ENCODE measurements at regions of chr17 and their contacts with region 1.

Region 1: GRCh38 chr17:39153599-39154051 is 2.2 kb upstream of the PLXDC1 start:
- DNase-seq: peak; percentile 99
- H3K4me3 ChIP-seq: peak overlapping the region; percentile 68 to 87 (median 80)
- H3K27ac ChIP-seq: peak overlapping the region; percentile 87 to 95 (median 94)
- H3K4me1 ChIP-seq: peaks cover 21 to 43% (median 34%) of the 10 kb centered on the region in 4 donors
- H3K27me3 ChIP-seq: peaks cover 0 to 20% (median 6%) of the 10 kb centered on the region in 4 donors
- CTCF ChIP-seq: peak in 2 of 3 experiments; percentile 11 to 15
- EP300 ChIP-seq: no peak
- POLR2A ChIP-seq: no peak

Region 2: DNA sequence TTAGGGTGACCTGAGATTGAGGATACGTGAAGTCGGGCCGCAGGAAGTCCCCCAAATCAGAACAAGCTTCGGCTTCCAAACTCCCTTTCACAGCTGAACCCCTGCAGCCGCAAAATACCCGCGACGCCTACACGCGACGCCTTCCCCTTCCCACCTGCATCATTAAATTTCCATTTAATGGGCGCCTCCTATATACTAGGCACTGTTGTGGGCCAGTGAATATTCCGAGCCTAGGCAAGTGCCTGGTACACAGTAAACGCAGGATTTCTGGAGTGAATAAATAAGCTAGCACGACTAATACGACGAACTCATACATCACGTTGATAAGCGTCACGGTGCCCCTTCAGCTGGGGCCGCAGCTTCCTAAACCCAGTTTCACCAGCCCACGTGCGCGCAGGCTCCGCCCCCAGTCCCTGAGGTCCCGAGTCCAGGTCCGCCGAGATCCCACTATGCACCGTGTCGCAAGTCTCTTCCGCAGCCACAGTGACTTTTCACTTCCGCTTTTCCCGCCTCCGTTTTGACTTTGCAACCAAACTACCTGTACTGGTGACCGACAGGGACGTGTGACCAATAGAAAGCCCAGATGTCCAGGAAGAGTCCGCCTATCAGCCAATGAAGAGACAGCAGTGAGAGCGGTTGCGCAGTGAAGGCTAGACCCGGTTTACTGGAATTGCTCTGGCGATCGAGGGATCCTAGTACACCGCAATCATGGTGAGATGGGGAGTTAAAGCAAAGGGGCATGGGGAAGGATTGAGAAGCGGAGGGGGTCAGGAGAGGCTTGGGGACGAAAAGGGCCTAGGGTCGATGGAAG is 401.3 kb before region 1 on chr17 and contains the start of gene PSMB3:
- intact Hi-C with region 1: no loop called
- DNase-seq: peak; percentile 100
- H3K4me3 ChIP-seq: peak within 1 kb of the TSS; percentile 84 to 97 (median 92)
- H3K27ac ChIP-seq: peak within 1 kb of the TSS; percentile 87 to 97 (median 94)
- H3K4me1 ChIP-seq: peaks cover 45 to 75% (median 63%) of the 10 kb centered on the region in 4 donors
- H3K27me3 ChIP-seq: peaks cover 0 to 6% (median 0%) of the 10 kb centered on the region in 4 donors
- CTCF ChIP-seq: no peak
- EP300 ChIP-seq: no peak
- POLR2A ChIP-seq: no peak
- total RNA-seq, gene PSMB3: 122 to 158 (median 137) TPM

Region 3: GRCh38 chr17:38868817-38869525 is 284.7 kb before region 1 on chr17:
- intact Hi-C with region 1: loop called (anchors 5 kb)
- DNase-seq: peak; percentile 99
- H3K4me3 ChIP-seq: peak overlapping the region; percentile 80 to 98 (median 93)
- H3K27ac ChIP-seq: peak overlapping the region; percentile 95 to 98 (median 97)
- H3K4me1 ChIP-seq: peaks cover 36 to 51% (median 45%) of the 10 kb centered on the region in 4 donors
- H3K27me3 ChIP-seq: no peaks in the 10 kb centered on the region
- CTCF ChIP-seq: peak in 1 of 3 experiments; percentile 15
- EP300 ChIP-seq: no peak
- POLR2A ChIP-seq: no peak

Region 4: DNA sequence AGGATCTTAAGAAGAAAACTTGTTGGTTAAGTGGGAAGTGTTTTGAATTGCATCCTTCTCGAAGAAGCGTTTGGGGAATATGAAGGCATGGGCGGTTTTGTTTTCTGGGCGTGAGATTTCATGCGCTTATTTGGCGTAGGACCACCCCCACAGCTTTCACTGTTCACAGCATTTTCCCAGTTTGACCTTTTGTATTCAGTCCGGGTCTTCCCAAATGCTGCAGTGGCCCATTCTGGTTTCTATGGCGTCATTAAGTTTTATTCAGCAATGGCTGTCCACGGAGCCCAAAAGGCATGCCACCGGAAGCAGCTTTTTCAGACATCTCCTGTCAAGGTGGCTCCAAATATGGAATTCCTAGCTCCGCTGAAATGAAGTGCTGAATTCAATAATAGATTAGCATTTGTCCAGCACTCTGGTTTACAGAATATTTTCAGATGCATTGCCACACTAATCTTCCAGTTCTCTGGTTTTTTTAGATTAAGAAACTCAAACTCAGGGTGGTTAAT is 95.9 kb before region 1 on chr17:
- intact Hi-C with region 1: loop called (anchors 5 kb)
- DNase-seq: no peak
- H3K4me3 ChIP-seq: peak overlapping the region; percentile 54 to 60 (median 59)
- H3K27ac ChIP-seq: peak overlapping the region in 1 of 4 donors; percentile 55
- H3K4me1 ChIP-seq: peaks cover 3 to 18% (median 18%) of the 10 kb centered on the region in 4 donors
- H3K27me3 ChIP-seq: no peaks in the 10 kb centered on the region
- CTCF ChIP-seq: no peak
- EP300 ChIP-seq: no peak
- POLR2A ChIP-seq: no peak

Region 5: DNA sequence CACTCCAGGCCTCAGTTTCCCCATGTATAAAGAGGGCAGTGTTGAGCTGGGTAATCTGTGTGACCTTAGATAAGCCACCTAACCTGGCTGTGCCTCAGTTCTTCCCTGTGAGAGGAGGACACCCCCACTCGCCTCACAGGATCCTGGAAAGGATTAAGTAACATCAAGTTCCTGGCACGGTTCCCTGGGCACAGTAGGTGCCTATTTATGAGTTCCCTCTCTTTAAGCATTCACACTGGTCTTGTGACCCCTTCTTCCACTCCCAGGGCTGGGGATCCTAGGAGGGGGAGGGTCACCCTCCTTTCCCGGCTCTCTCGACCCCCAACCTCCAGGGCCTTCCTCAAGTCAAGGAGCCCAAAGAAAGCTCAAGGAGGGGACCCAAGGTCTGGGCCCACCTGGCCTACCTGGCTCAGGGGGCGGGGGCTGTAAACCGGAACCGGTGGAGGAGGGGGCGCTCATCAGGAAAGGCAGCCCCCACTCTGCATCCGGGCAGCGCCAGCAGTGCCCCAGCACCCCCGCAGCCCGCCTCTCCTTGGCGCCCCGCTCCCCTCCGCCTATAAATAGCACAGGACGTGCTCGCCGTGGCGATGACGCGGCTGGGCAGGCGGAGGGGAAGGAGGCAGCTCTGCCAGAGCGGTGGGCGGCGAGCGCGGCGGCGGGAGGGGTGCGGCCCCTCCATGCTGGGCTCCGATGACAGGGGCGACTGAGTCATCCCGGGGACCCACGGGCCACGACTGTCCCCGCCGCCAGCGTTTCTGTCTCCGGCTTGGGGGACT is 55.9 kb after region 1 on chr17:
- intact Hi-C with region 1: no loop called
- DNase-seq: no peak
- H3K4me3 ChIP-seq: peak overlapping the region; percentile 48 to 58 (median 58)
- H3K27ac ChIP-seq: peak overlapping the region; percentile 37 to 73 (median 60)
- H3K4me1 ChIP-seq: peaks cover 14 to 34% (median 27%) of the 10 kb centered on the region in 4 donors
- H3K27me3 ChIP-seq: peaks cover 0 to 5% (median 0%) of the 10 kb centered on the region in 4 donors
- CTCF ChIP-seq: no peak
- EP300 ChIP-seq: no peak
- POLR2A ChIP-seq: no peak

Region 6: DNA sequence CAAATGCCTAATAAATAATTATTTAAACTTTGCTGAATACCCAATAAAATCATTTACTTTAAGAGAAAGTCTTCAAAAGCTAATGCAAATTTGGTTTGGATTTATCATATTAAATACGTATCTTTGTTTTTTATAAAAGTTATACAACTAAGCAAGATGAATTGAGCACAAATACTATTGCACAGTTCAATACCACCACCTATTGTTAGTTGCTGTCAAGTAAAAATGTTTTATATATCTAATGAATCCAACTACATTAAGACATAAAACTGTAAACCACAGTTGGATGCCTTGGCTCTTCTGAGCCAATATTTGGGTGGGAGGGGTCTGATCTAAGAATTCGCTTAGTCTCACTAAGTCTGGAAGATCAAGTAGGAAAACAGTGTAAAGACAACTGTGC is 240.1 kb after region 1 on chr17:
- intact Hi-C with region 1: no loop called
- DNase-seq: no peak
- H3K4me3 ChIP-seq: no peak overlapping the region
- H3K27ac ChIP-seq: no peak overlapping the region
- H3K4me1 ChIP-seq: peaks cover 22 to 61% (median 34%) of the 10 kb centered on the region in 4 donors
- H3K27me3 ChIP-seq: no peaks in the 10 kb centered on the region
- CTCF ChIP-seq: peak in 1 of 3 experiments; percentile 16
- EP300 ChIP-seq: no peak
- POLR2A ChIP-seq: no peak

Measured in esophagus muscularis mucosa (tissue), 4 donors.